ENCODE measurements at regions of chr15 and their contacts with region 1.

Region 1: DNA sequence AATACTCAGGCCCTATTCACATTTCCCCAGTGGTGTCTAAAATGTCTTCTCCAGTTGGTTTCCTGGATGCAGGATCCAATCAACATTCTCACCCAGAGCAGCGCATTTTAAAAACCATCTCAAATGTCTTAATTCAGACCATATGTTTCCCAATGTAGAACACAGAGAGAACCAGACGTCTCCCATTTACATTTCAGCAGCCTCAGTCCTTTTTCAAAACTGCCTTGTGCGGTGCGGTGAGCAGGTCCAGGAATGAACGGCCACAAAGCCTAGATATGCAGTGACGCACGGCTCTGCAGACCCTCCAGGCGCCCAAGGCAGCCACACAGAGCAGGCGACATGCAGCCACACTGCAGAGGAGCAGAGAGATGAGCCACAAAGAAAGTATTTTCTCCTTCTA is 66.1 kb upstream of the MEX3B start:
- DNase-seq: no peak
- H3K4me3 ChIP-seq: no peak overlapping the region
- H3K27ac ChIP-seq: no peak overlapping the region
- H3K4me1 ChIP-seq: no peaks in the 10 kb centered on the region
- H3K27me3 ChIP-seq: no peaks in the 10 kb centered on the region
- CTCF ChIP-seq: no peak
- POLR2A ChIP-seq: no peak

Region 2: GRCh38 chr15:81642451-81642990 is 469.4 kb before region 1 on chr15:
- intact Hi-C with region 1: no loop called
- DNase-seq: no peak
- H3K4me3 ChIP-seq: no peak overlapping the region
- H3K27ac ChIP-seq: no peak overlapping the region
- H3K4me1 ChIP-seq: no peaks in the 10 kb centered on the region
- H3K27me3 ChIP-seq: no peaks in the 10 kb centered on the region
- CTCF ChIP-seq: no peak
- POLR2A ChIP-seq: no peak

Region 3: GRCh38 chr15:82132742-82133141 is 20.8 kb after region 1 on chr15:
- intact Hi-C with region 1: loop called in 1 of 2 experiments (anchors 2 kb)
- DNase-seq: peak in 3 of 7 donors; percentile 12 to 59 (median 30)
- H3K4me3 ChIP-seq: no peak overlapping the region
- H3K27ac ChIP-seq: no peak overlapping the region
- H3K4me1 ChIP-seq: peaks cover 0 to 11% of the 10 kb centered on the region in 2 donors
- H3K27me3 ChIP-seq: no peaks in the 10 kb centered on the region
- CTCF ChIP-seq: no peak
- POLR2A ChIP-seq: no peak

Region 4: GRCh38 chr15:82159922-82160321 is 48.0 kb after region 1 on chr15:
- intact Hi-C with region 1: loop called in 1 of 2 experiments (anchors 10 kb)
- DNase-seq: peak in 6 of 7 donors; percentile 25 to 72 (median 40)
- H3K4me3 ChIP-seq: no peak overlapping the region
- H3K27ac ChIP-seq: peak overlapping the region in 1 of 5 donors; percentile 1
- H3K4me1 ChIP-seq: no peaks in the 10 kb centered on the region
- H3K27me3 ChIP-seq: no peaks in the 10 kb centered on the region
- CTCF ChIP-seq: no peak
- POLR2A ChIP-seq: no peak

Region 5: GRCh38 chr15:82197733-82198594 is 86.0 kb after region 1 on chr15:
- intact Hi-C with region 1: loop called in 1 of 2 experiments (anchors 5 kb)
- DNase-seq: peak; percentile 66 to 89 (median 74)
- H3K4me3 ChIP-seq: no peak overlapping the region
- H3K27ac ChIP-seq: no peak overlapping the region
- H3K4me1 ChIP-seq: peaks cover 0 to 3% of the 10 kb centered on the region in 2 donors
- H3K27me3 ChIP-seq: no peaks in the 10 kb centered on the region
- CTCF ChIP-seq: peak; percentile 68 to 80 (median 75)
- POLR2A ChIP-seq: no peak

Measured in adrenal gland (tissue), 19 donors.